B cell (primary cell): ENCODE measurements at regions of chr10 and their contacts with region 1.

Region 1: DNA sequence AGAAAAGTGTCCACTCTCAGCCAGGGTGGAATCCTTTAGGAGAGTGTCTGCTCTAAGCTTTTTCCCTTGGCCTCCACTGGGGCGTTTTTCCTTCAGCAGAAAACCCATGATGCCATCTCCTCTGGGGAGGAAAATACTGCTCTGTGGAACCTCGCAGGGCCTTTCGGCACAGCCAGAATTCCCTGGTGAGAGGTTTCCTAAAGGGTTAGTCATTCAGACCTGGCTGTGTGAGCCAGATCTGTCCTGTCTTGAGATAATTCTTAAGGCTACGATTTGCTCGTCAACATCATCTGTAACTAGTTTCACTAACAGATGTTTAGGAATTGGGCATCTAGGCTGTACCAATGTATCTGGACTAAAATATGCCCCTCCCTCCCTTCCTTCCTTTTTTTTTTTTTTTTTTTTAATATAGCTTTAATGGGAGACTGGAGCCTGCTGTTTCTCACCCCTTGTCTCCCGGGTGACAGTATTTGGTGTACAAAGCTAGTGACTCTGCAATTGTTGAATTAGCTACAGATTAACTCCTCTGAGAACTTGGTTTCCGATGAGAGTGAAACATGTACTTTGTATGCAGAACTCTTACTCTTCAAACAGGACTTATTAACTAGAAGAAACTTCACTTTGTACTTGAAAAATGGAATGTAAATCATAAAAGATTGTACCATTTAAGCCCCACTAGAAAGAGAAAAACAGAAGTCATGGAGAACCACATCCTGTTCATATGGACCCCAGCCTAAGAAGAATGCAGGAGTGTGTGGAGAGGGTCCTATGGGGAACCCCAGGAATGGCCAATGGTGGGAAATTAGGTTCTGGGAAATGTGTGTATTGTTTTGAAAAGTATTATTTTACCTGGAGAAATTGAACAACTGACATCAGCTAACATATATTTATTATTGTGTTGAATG is 230.9 kb downstream of the CAMK1D start:
- DNase-seq: no peak
- ATAC-seq: no peak
- H3K4me3 ChIP-seq: no peak overlapping the region
- H3K4me3 Mint-ChIP-seq: no peak overlapping the region
- H3K27ac ChIP-seq: no peak overlapping the region
- H3K27ac Mint-ChIP-seq: no peak overlapping the region
- H3K4me1 ChIP-seq: peaks cover 4 to 7% of the 10 kb centered on the region in 2 donors
- H3K4me1 Mint-ChIP-seq: peaks cover 34% of the 10 kb centered on the region
- H3K27me3 ChIP-seq: no peaks in the 10 kb centered on the region
- H3K27me3 Mint-ChIP-seq: no peaks in the 10 kb centered on the region
- CTCF ChIP-seq: no peak

Region 2: DNA sequence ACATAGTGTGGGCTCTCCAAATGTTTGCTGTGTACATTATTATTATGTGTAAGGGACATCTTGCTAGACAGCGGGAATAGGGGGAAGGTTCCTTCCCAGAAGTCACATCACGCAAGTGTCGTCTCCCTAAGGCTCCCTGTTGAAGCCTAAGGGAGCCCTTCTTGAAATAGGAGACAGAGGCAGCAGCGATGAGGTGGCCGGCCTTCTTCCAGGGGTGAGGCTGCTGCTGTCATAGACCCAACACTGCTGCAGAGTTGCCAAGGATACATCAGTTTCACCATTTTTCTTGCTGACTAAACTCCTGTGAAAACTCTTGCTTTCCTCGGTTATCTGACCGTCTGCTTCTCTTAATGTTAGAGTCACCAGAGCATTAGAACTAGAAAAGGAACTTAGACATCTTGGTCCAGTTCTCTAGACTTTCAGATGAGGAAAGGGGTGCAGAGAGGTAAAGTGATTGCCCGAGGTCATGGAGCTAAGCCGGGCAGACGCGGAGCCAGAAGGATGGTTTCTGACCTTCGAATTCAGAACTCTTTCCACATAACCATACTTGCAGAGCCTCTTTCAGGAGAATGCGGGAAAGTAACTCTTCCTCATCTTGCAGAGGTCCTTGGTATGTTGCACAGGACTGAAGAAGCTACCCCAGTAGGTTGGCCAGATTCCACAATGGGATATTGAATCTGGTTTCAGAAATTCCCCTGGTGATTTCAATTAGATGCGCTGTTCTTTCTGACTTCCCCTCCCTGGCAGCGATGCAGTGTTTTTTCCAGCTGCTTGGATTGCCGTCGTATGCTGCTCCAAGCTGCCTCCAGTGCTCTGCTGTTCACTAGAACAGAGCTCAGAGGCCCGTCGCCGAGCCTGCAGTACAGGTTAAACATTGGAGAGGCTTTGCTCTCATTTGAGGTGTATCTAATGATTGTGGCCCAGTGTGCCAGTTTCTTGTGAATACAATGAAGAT is 13.8 kb before region 1 on chr10:
- CTCF ChIA-PET with region 1: no interaction called
- POLR2A ChIA-PET with region 1: no interaction called
- intact Hi-C with region 1: no loop called
- DNase-seq: no peak
- ATAC-seq: no peak
- H3K4me3 ChIP-seq: no peak overlapping the region
- H3K4me3 Mint-ChIP-seq: no peak overlapping the region
- H3K27ac ChIP-seq: no peak overlapping the region
- H3K27ac Mint-ChIP-seq: peak overlapping the region; percentile 43
- H3K4me1 ChIP-seq: peaks cover 27 to 36% of the 10 kb centered on the region in 2 donors
- H3K4me1 Mint-ChIP-seq: peaks cover 62% of the 10 kb centered on the region
- H3K27me3 ChIP-seq: no peaks in the 10 kb centered on the region
- H3K27me3 Mint-ChIP-seq: no peaks in the 10 kb centered on the region
- CTCF ChIP-seq: no peak

Region 3: DNA sequence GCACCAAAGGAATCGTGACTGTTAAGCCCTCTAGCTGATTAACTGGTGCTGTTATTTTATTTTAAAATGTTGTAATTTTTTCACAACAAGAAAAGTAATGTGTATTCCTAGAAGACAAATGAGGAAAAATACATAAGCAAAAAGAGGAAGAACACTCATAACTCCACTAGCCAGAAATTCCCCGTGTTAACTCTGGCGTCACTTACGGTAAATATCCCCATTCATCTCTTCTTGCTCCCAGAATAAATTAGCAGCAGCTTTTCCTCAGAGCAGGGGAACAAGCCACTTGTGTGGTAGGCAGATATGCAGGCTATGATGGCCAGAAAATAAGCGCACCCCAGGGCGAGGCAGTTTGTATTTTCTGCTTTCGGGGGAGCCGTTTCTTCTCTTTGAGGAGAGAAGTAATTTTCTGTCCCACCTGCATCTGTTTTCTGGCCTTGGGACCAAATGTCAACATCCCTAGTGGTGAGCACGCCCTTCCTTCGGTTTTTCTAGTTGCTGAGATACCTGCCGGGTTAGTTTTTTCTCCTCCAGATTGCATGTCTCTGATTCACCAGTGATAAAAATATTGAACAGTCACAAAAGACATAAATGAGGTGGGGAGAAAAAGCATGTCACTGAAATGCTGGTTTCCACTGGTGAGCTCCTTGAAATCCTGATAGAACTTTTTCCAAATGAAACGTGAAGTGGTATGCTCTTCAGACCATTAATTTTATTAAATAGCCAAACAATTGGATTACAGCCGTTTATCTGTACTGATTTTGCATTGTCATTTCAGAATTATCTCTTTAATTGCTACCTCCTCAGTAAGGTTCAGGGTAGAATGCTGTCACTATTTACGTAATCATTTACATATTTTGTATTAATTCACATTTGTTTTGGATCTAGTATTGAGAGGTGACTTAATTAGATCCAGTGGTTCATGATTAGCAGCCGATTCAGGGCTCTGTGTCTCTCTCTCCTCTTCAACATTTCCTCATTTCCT is 37.3 kb after region 1 on chr10:
- CTCF ChIA-PET with region 1: no interaction called
- POLR2A ChIA-PET with region 1: interaction called, 17 read pairs
- intact Hi-C with region 1: no loop called
- DNase-seq: peak; percentile 26
- ATAC-seq: no peak
- H3K4me3 ChIP-seq: no peak overlapping the region
- H3K4me3 Mint-ChIP-seq: no peak overlapping the region
- H3K27ac ChIP-seq: no peak overlapping the region
- H3K27ac Mint-ChIP-seq: peak overlapping the region; percentile 7
- H3K4me1 ChIP-seq: peaks cover 10 to 16% of the 10 kb centered on the region in 2 donors
- H3K4me1 Mint-ChIP-seq: peaks cover 34% of the 10 kb centered on the region
- H3K27me3 ChIP-seq: no peaks in the 10 kb centered on the region
- H3K27me3 Mint-ChIP-seq: no peaks in the 10 kb centered on the region
- CTCF ChIP-seq: no peak